Caco-2 (cell line): ENCODE measurements at regions of chr2 and their contacts with region 1.

Region 1: GRCh38 chr2:174341286-174341994 is 6.7 kb downstream of the SP9 start:
- DNase-seq: peak; percentile 83 to 92
- H3K4me3 ChIP-seq: peak overlapping the region; percentile 49
- H3K4me3 Mint-ChIP-seq: peak overlapping the region; percentile 93
- H3K27ac Mint-ChIP-seq: no peak overlapping the region
- H3K4me1 ChIP-seq: no peaks in the 10 kb centered on the region
- H3K4me1 Mint-ChIP-seq: peaks cover 6% of the 10 kb centered on the region
- H3K27me3 ChIP-seq: no peaks in the 10 kb centered on the region; the same call in 1 of the 2 replicates
- H3K27me3 Mint-ChIP-seq: peaks cover 9% of the 10 kb centered on the region
- CTCF ChIP-seq: peak; percentile 97 to 98

Region 2: DNA sequence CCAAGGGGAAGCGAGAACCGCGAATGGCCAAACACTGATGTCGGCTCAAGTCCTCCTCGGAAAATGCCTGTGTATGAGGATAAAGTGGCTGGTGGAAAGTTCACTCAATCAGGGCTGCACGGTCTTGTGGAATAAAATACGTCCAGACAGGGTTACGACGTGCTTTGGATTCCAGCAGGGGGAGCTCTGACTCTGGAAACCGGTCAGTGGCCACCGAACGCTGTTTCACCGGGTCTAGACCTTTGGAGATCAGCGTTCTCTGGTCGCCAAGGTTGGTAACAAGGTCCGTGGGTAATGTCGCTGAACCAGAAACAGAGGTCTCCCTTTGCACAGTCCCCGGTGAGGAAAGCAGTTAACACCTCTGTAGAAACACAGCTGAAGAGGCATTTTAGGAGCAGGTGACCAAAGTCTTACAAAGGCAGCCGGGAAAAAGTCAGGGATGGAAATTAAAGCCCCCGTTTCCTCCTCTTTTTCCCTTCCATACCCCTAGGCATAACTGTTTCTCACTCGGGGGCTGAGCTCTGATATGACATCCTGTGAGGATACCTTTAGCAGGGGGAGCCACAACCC is 939.0 kb before region 1 on chr2:
- CTCF ChIA-PET with region 1: interaction called, 4 read pairs
- POLR2A ChIA-PET with region 1: no interaction called
- intact Hi-C with region 1: loop called (anchors 1 kb)
- DNase-seq: peak; percentile 86 to 89
- H3K4me3 ChIP-seq: no peak overlapping the region
- H3K4me3 Mint-ChIP-seq: peak overlapping the region; percentile 45
- H3K27ac Mint-ChIP-seq: no peak overlapping the region
- H3K4me1 ChIP-seq: no peaks in the 10 kb centered on the region
- H3K4me1 Mint-ChIP-seq: peaks cover 13% of the 10 kb centered on the region
- H3K27me3 ChIP-seq: no peaks in the 10 kb centered on the region
- H3K27me3 Mint-ChIP-seq: peaks cover 12% of the 10 kb centered on the region
- CTCF ChIP-seq: peak; percentile 86 to 91

Region 3: GRCh38 chr2:173884025-173884802 is 457.2 kb before region 1 on chr2:
- CTCF ChIA-PET with region 1: interaction called, 12 read pairs
- POLR2A ChIA-PET with region 1: no interaction called
- intact Hi-C with region 1: loop called (anchors 1 kb)
- DNase-seq: peak; percentile 56 to 64
- H3K4me3 ChIP-seq: no peak overlapping the region
- H3K4me3 Mint-ChIP-seq: no peak overlapping the region
- H3K27ac Mint-ChIP-seq: no peak overlapping the region
- H3K4me1 ChIP-seq: no peaks in the 10 kb centered on the region
- H3K4me1 Mint-ChIP-seq: no peaks in the 10 kb centered on the region
- H3K27me3 ChIP-seq: no peaks in the 10 kb centered on the region
- H3K27me3 Mint-ChIP-seq: no peaks in the 10 kb centered on the region
- CTCF ChIP-seq: peak; percentile 62 to 83

Region 4: DNA sequence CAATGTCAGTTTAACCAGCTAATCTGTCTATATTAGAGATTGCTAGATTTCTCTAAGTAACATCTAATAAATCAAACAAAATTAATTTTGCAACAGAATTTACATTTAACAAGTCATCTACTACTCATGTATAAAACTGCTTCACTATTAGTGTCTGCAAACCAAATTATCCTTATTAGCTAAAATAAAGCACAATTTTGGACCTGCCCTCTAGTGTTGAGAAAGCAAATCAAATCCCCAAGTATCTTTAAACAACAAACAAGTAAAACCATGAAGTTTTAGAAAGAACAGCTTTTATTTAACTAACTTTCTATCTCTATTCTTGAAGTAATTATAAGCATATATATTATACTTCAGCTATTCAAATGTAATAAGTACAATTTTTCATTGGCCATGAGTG is 263.2 kb before region 1 on chr2:
- CTCF ChIA-PET with region 1: interaction called, 3 read pairs
- POLR2A ChIA-PET with region 1: no interaction called
- intact Hi-C with region 1: loop called (anchors 10 kb)
- DNase-seq: no peak
- H3K4me3 ChIP-seq: no peak overlapping the region
- H3K4me3 Mint-ChIP-seq: no peak overlapping the region
- H3K27ac Mint-ChIP-seq: peak overlapping the region; percentile 21
- H3K4me1 ChIP-seq: peaks cover 43% of the 10 kb centered on the region
- H3K4me1 Mint-ChIP-seq: peaks cover 40% of the 10 kb centered on the region
- H3K27me3 ChIP-seq: no peaks in the 10 kb centered on the region
- H3K27me3 Mint-ChIP-seq: no peaks in the 10 kb centered on the region
- CTCF ChIP-seq: peak in 1 of 2 experiments; percentile 36

Region 5: DNA sequence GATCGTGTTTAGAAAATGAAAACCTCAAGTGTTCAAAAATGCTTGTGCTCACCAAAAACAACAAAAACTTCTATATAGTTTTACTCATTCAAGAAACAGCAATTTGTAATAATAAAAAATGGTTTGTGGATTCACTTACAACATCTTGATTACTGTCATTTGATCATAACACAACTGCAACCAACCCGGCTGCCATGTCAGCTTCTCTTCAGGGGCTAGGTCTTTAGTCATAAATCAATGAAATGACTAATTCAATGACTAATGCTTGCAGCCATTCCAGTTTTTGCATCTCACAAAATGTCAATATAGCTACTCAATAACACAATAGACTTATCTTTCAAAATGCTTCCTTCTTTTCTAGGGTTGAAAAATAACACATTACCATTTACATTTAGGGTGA is 221.1 kb before region 1 on chr2:
- CTCF ChIA-PET with region 1: no interaction called
- POLR2A ChIA-PET with region 1: no interaction called
- intact Hi-C with region 1: no loop called
- DNase-seq: no peak
- H3K4me3 ChIP-seq: no peak overlapping the region
- H3K4me3 Mint-ChIP-seq: no peak overlapping the region
- H3K27ac Mint-ChIP-seq: no peak overlapping the region
- H3K4me1 ChIP-seq: peaks cover 4% of the 10 kb centered on the region; the same call in 1 of the 2 replicates
- H3K4me1 Mint-ChIP-seq: peaks cover 9% of the 10 kb centered on the region
- H3K27me3 ChIP-seq: no peaks in the 10 kb centered on the region
- H3K27me3 Mint-ChIP-seq: no peaks in the 10 kb centered on the region
- CTCF ChIP-seq: no peak

Region 6: GRCh38 chr2:174191342-174192074 is 149.9 kb before region 1 on chr2:
- CTCF ChIA-PET with region 1: interaction called, 14 read pairs
- POLR2A ChIA-PET with region 1: no interaction called
- intact Hi-C with region 1: no loop called
- DNase-seq: no peak
- H3K4me3 ChIP-seq: no peak overlapping the region
- H3K4me3 Mint-ChIP-seq: no peak overlapping the region
- H3K27ac Mint-ChIP-seq: no peak overlapping the region
- H3K4me1 ChIP-seq: no peaks in the 10 kb centered on the region
- H3K4me1 Mint-ChIP-seq: peaks cover 5% of the 10 kb centered on the region
- H3K27me3 ChIP-seq: no peaks in the 10 kb centered on the region
- H3K27me3 Mint-ChIP-seq: no peaks in the 10 kb centered on the region
- CTCF ChIP-seq: no peak

Region 7: DNA sequence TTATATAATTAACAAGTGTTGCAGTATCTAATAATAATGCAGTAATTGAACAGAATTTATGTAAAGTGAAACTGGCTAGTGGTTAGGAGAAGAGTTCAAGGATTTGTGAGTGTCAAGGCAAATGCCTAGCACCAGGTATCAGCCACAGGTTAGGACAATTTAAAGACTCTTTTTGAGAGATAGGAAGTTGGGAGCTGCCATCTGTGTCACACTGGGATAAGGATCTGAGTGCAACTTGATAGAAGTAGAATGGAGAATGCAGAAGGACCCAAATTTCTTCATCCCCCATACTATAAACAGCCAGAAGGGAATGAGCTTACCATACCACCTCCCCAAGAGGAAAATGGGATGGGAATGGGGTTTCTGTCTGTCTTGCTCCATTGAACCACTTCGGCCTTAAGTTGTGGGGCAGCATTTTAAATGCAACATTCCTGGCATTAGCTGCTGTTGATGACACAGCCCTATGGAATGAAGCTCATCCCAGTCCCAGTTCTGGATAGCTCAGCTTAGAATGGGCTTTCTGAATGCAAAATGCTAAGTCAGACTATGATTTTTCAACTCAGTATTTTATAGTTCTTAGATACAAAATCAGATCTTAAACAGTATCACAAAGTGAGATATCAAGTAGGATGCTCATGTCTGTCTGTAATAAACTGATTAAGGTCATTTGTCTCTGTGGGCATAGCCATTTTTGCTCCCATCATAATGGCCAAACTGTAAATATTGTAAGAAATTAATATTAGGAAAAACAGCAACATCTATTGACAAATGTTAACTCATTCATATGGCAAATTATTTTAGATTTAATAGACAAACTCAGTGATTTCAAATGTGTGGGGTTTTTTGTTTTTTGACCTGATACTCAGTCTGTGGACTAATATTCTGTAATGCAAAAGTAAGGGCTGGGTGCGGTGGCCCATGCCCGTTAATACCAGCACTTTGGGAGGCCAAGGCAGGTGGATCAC is 101.4 kb after region 1 on chr2:
- CTCF ChIA-PET with region 1: interaction called, 3 read pairs
- POLR2A ChIA-PET with region 1: no interaction called
- intact Hi-C with region 1: loop called (anchors 10 kb)
- DNase-seq: peak; percentile 43 to 59
- H3K4me3 ChIP-seq: no peak overlapping the region
- H3K4me3 Mint-ChIP-seq: no peak overlapping the region
- H3K27ac Mint-ChIP-seq: peak overlapping the region; percentile 69
- H3K4me1 ChIP-seq: peaks cover 15% of the 10 kb centered on the region
- H3K4me1 Mint-ChIP-seq: peaks cover 14% of the 10 kb centered on the region
- H3K27me3 ChIP-seq: no peaks in the 10 kb centered on the region
- H3K27me3 Mint-ChIP-seq: no peaks in the 10 kb centered on the region
- CTCF ChIP-seq: peak in 1 of 2 experiments; percentile 15